Heart left ventricle (tissue), 16 donors: ENCODE measurements at regions of chr2 and their contacts with region 1.

Region 1: GRCh38 chr2:158539176-158540005 is 82.6 kb downstream of the PKP4 start:
- DNase-seq: peak in 1 of 5 donors; percentile 39
- ATAC-seq: peak in 3 of 4 donors; percentile 59 to 86 (median 65)
- H3K4me3 ChIP-seq: no peak overlapping the region
- H3K27ac ChIP-seq: peak overlapping the region in 7 of 12 donors; percentile 4 to 53 (median 42)
- H3K4me1 ChIP-seq: peaks cover 0 to 31% (median 15%) of the 10 kb centered on the region in 12 donors
- H3K27me3 ChIP-seq: no peaks in the 10 kb centered on the region
- CTCF ChIP-seq: no peak
- POLR2A ChIP-seq: no peak

Region 2: GRCh38 chr2:158644139-158644538 is 104.7 kb after region 1 on chr2:
- intact Hi-C with region 1: no loop called
- DNase-seq: no peak
- ATAC-seq: no peak
- H3K4me3 ChIP-seq: no peak overlapping the region
- H3K27ac ChIP-seq: no peak overlapping the region
- H3K4me1 ChIP-seq: no peaks in the 10 kb centered on the region
- H3K27me3 ChIP-seq: no peaks in the 10 kb centered on the region
- CTCF ChIP-seq: no peak
- POLR2A ChIP-seq: no peak

Region 3: GRCh38 chr2:158729873-158730620 is 190.7 kb after region 1 on chr2:
- intact Hi-C with region 1: loop called in 1 of 10 experiments (anchors 10 kb)
- DNase-seq: no peak
- ATAC-seq: peak in 1 of 4 donors; percentile 16
- H3K4me3 ChIP-seq: no peak overlapping the region
- H3K27ac ChIP-seq: no peak overlapping the region
- H3K4me1 ChIP-seq: peaks cover 0 to 20% (median 3%) of the 10 kb centered on the region in 12 donors
- H3K27me3 ChIP-seq: no peaks in the 10 kb centered on the region
- CTCF ChIP-seq: no peak
- POLR2A ChIP-seq: no peak